IMR-90 (cell line): ENCODE measurements at regions of chr9 and their contacts with region 1.

Region 1: GRCh38 chr9:3541206-3541605 is 15.4 kb upstream of the RFX3 start:
- DNase-seq: no peak
- ATAC-seq: no peak
- H3K4me3 ChIP-seq: no peak overlapping the region
- H3K27ac ChIP-seq: no peak overlapping the region
- H3K4me1 ChIP-seq: no peaks in the 10 kb centered on the region
- H3K27me3 ChIP-seq: no peaks in the 10 kb centered on the region
- CTCF ChIP-seq: no peak
- POLR2A ChIP-seq: no peak
- RAD21 ChIP-seq: no peak

Region 2: GRCh38 chr9:3628239-3628638 is 87.0 kb after region 1 on chr9:
- CTCF ChIA-PET with region 1: no interaction called
- POLR2A ChIA-PET with region 1: no interaction called
- dilution Hi-C with region 1: no loop called
- in situ Hi-C with region 1: no loop called
- intact Hi-C with region 1: loop called (anchors 5 kb)
- DNase-seq: no peak
- ATAC-seq: no peak
- H3K4me3 ChIP-seq: no peak overlapping the region
- H3K27ac ChIP-seq: no peak overlapping the region
- H3K4me1 ChIP-seq: no peaks in the 10 kb centered on the region
- H3K27me3 ChIP-seq: no peaks in the 10 kb centered on the region
- CTCF ChIP-seq: no peak
- POLR2A ChIP-seq: no peak
- RAD21 ChIP-seq: no peak